IMR-90 (cell line): ENCODE measurements at regions of chr13 and their contacts with region 1.

Region 1: GRCh38 chr13:21051675-21052074 is 9.7 kb downstream of the LATS2 start:
- DNase-seq: no peak
- ATAC-seq: no peak
- H3K4me3 ChIP-seq: no peak overlapping the region
- H3K27ac ChIP-seq: no peak overlapping the region
- H3K4me1 ChIP-seq: peaks cover 33% of the 10 kb centered on the region
- H3K27me3 ChIP-seq: no peaks in the 10 kb centered on the region
- CTCF ChIP-seq: no peak
- POLR2A ChIP-seq: no peak
- RAD21 ChIP-seq: no peak

Region 2: DNA sequence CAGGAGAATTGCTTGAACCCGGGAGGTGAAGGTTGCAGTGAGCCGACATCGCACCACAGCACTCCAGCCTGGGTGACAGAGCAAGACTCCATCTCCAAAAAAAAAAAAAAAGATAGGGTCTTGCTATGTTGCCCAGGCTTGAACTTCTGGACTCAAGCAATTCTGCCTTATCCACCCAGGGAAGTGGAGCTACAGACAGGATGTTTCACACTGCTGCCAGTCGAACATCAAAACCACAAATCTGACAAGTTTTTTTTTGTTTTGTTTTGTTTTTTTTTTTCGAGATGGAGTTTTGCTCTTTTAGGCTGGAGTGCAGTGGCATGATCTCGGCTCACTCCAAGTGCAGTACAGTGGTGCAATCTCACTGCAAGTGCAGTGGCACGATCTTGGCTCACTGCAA is 159.9 kb before region 1 on chr13:
- CTCF ChIA-PET with region 1: no interaction called
- POLR2A ChIA-PET with region 1: no interaction called
- dilution Hi-C with region 1: no loop called
- in situ Hi-C with region 1: no loop called
- intact Hi-C with region 1: no loop called
- DNase-seq: no peak
- ATAC-seq: no peak
- H3K4me3 ChIP-seq: no peak overlapping the region
- H3K27ac ChIP-seq: no peak overlapping the region
- H3K4me1 ChIP-seq: no peaks in the 10 kb centered on the region
- H3K27me3 ChIP-seq: no peaks in the 10 kb centered on the region
- CTCF ChIP-seq: no peak
- POLR2A ChIP-seq: no peak
- RAD21 ChIP-seq: no peak

Region 3: DNA sequence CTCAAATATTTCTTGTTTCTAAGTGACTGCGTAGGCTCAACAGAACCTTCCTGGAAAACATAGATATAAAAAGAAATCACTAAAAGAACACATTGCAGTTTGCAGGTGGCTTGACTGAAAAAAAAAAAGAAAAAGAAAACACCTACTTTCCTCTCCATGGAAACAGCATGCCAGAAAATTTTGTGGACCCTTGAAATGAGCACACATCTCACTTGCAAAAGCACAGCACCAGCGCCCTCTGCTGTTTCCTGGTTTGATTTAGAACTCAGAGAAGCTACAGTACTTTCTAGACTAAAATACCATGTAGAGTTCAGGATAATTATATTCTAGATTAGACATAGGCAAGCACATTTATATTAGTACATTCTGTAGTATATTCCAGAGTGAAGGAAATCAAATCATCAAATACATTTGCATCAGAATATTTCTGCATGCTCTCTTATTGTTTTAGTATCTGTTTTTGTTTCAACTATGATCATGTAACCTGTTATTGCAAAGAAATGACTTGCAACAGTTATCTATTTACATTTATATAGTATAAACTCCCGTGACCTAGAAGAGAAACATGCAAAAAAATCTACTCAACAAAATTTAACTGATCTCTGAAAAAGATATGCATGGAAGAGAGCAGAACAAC is 126.8 kb before region 1 on chr13:
- CTCF ChIA-PET with region 1: no interaction called
- POLR2A ChIA-PET with region 1: no interaction called
- dilution Hi-C with region 1: no loop called
- in situ Hi-C with region 1: no loop called
- intact Hi-C with region 1: no loop called
- DNase-seq: peak; percentile 84
- ATAC-seq: peak; percentile 80
- H3K4me3 ChIP-seq: no peak overlapping the region
- H3K27ac ChIP-seq: no peak overlapping the region
- H3K4me1 ChIP-seq: no peaks in the 10 kb centered on the region
- H3K27me3 ChIP-seq: 0 out of 2 replicates have a peak, but pooled peaks cover 2% of the 10 kb centered on the region
- CTCF ChIP-seq: peak; percentile 91
- POLR2A ChIP-seq: no peak
- RAD21 ChIP-seq: peak; percentile 91

Region 4: DNA sequence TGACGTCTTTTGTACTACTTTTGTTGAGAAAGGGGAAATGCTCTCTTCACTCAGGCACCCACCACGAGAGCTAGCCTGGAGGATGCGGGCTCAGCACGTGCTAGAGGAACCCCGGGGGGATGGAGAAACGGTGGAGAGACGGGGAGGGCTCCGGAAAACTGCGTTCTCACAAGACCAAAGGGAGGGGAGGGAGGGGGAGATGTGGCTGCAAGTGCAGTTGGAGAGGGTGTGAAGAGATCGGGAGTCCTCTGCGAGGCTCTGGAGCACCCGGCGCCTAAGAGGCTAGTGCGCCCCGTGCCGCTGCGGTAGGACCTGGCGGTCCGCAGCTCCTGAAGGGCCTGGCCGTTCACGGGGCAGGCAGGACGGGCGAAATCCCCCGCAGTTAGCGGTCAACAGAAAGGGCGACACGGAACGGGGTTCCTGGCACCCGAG is 105.7 kb before region 1 on chr13:
- CTCF ChIA-PET with region 1: no interaction called
- POLR2A ChIA-PET with region 1: interaction called, 13 read pairs
- dilution Hi-C with region 1: no loop called
- in situ Hi-C with region 1: no loop called
- intact Hi-C with region 1: no loop called
- DNase-seq: no peak
- ATAC-seq: no peak
- H3K4me3 ChIP-seq: no peak overlapping the region
- H3K27ac ChIP-seq: no peak overlapping the region
- H3K4me1 ChIP-seq: peaks cover 3% of the 10 kb centered on the region; the same call in 1 of the 2 replicates
- H3K27me3 ChIP-seq: no peaks in the 10 kb centered on the region; the same call in 1 of the 2 replicates
- CTCF ChIP-seq: no peak
- POLR2A ChIP-seq: no peak
- RAD21 ChIP-seq: no peak